ENCODE measurements at regions of chr2 and their contacts with region 1.

Region 1: DNA sequence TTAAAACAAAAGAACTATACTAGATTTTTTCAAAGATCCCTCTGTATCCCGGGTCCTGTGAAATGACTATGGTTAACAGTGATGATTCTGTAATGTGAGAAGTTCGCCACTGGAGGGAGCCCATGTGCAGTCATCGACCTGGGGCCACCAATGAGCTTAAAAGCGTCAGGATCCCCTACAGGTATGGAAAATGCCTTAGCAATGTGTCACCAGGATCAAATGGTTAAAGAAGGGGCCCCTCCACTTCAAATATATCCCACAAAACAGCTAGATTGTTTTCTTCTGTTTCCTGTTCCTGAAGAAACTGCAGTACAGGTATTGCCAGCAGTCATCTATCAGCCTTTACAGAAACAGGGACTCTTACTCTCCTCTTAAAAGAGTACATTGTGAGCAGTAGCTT is 15.3 kb downstream of the CHRNA1 start:
- DNase-seq: peak; percentile 53 to 83 (median 74)
- ATAC-seq: peak; percentile 45
- H3K4me3 ChIP-seq: no peak overlapping the region
- H3K4me3 Mint-ChIP-seq: no peak overlapping the region
- H3K27ac ChIP-seq: no peak overlapping the region
- H3K27ac Mint-ChIP-seq: peak overlapping the region; percentile 32
- H3K4me1 ChIP-seq: peaks cover 15% of the 10 kb centered on the region
- H3K4me1 Mint-ChIP-seq: peaks cover 33% of the 10 kb centered on the region
- H3K27me3 ChIP-seq: no peaks in the 10 kb centered on the region
- H3K27me3 Mint-ChIP-seq: no peaks in the 10 kb centered on the region
- CTCF ChIP-seq: peak; percentile 85

Region 2: GRCh38 chr2:174522553-174522952 is 226.4 kb before region 1 on chr2:
- CTCF ChIA-PET with region 1: no interaction called
- POLR2A ChIA-PET with region 1: no interaction called
- intact Hi-C with region 1: no loop called
- DNase-seq: peak in 2 of 9 experiments; percentile 32 to 44
- ATAC-seq: no peak
- H3K4me3 ChIP-seq: no peak overlapping the region
- H3K4me3 Mint-ChIP-seq: no peak overlapping the region
- H3K27ac ChIP-seq: no peak overlapping the region
- H3K27ac Mint-ChIP-seq: no peak overlapping the region
- H3K4me1 ChIP-seq: no peaks in the 10 kb centered on the region
- H3K4me1 Mint-ChIP-seq: peaks cover 18% of the 10 kb centered on the region
- H3K27me3 ChIP-seq: no peaks in the 10 kb centered on the region
- H3K27me3 Mint-ChIP-seq: no peaks in the 10 kb centered on the region
- CTCF ChIP-seq: no peak

Region 3: GRCh38 chr2:174561283-174561971 is 187.5 kb before region 1 on chr2:
- CTCF ChIA-PET with region 1: no interaction called
- POLR2A ChIA-PET with region 1: no interaction called
- intact Hi-C with region 1: no loop called
- DNase-seq: no peak
- ATAC-seq: no peak
- H3K4me3 ChIP-seq: no peak overlapping the region
- H3K4me3 Mint-ChIP-seq: no peak overlapping the region
- H3K27ac ChIP-seq: peak overlapping the region in 1 of 2 experiments; percentile 34
- H3K27ac Mint-ChIP-seq: peak overlapping the region; percentile 81
- H3K4me1 ChIP-seq: no peaks in the 10 kb centered on the region
- H3K4me1 Mint-ChIP-seq: peaks cover 7% of the 10 kb centered on the region
- H3K27me3 ChIP-seq: no peaks in the 10 kb centered on the region
- H3K27me3 Mint-ChIP-seq: no peaks in the 10 kb centered on the region
- CTCF ChIP-seq: no peak

Region 4: GRCh38 chr2:174729797-174730697 is 18.9 kb before region 1 on chr2:
- CTCF ChIA-PET with region 1: interaction called, 12 read pairs
- POLR2A ChIA-PET with region 1: interaction called, 3 read pairs
- intact Hi-C with region 1: no loop called
- DNase-seq: peak in 8 of 9 experiments; percentile 2 to 61 (median 34)
- ATAC-seq: peak; percentile 76
- H3K4me3 ChIP-seq: peak overlapping the region; percentile 60 to 74
- H3K4me3 Mint-ChIP-seq: peak overlapping the region; percentile 88
- H3K27ac ChIP-seq: no peak overlapping the region
- H3K27ac Mint-ChIP-seq: no peak overlapping the region
- H3K4me1 ChIP-seq: peaks cover 10% of the 10 kb centered on the region
- H3K4me1 Mint-ChIP-seq: peaks cover 20% of the 10 kb centered on the region
- H3K27me3 ChIP-seq: peaks cover 0 to 7% of the 10 kb centered on the region in 2 experiments
- H3K27me3 Mint-ChIP-seq: peaks cover 8% of the 10 kb centered on the region
- CTCF ChIP-seq: no peak

Region 5: DNA sequence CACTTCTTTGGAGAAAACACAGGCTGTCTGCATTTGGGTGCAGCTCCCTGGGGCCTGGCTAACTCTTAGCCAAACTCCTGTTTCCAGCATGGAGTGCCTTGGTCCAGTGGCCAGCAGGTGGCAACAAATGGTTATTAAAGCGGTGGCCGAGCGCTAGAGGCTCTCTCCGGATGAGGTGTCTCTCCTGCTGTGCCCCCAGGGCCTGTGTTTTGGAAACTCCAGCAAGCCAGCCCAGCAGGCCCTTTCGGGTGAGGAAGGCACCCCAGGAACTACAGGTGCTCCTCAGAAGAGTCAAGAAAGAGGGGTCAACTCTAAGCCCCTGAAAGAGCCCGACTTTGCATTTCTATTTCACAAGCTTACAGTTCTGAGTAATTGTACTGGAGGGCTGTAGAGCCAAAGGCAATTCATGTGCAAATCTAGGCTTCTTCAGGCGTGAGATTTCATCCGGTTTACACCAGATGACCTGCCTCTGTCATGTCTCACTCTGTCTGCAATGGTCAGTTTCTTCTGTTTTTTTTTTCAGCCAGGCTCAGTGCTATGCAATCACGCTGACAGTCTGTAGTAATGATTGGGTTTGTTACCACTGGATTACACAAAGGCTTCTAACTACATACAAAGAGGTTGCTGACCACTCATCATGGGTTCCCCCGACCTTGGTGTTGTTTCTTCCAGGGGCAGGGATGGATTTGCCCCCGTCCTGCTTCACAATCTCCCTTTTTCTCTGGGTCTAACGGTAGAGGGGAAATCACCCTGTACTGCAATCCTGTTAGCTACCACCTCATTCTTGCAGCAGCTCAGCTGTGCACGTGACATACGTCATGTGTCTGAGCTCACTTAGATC is 22.9 kb after region 1 on chr2:
- CTCF ChIA-PET with region 1: interaction called, 14 read pairs
- POLR2A ChIA-PET with region 1: no interaction called
- intact Hi-C with region 1: loop called in 1 of 2 experiments (anchors 1 kb)
- DNase-seq: peak in 6 of 9 experiments; percentile 23 to 68 (median 51)
- ATAC-seq: peak; percentile 60
- H3K4me3 ChIP-seq: no peak overlapping the region
- H3K4me3 Mint-ChIP-seq: no peak overlapping the region
- H3K27ac ChIP-seq: no peak overlapping the region
- H3K27ac Mint-ChIP-seq: peak overlapping the region; percentile 3
- H3K4me1 ChIP-seq: peaks cover 14% of the 10 kb centered on the region
- H3K4me1 Mint-ChIP-seq: peaks cover 21% of the 10 kb centered on the region
- H3K27me3 ChIP-seq: no peaks in the 10 kb centered on the region
- H3K27me3 Mint-ChIP-seq: no peaks in the 10 kb centered on the region
- CTCF ChIP-seq: no peak

Region 6: DNA sequence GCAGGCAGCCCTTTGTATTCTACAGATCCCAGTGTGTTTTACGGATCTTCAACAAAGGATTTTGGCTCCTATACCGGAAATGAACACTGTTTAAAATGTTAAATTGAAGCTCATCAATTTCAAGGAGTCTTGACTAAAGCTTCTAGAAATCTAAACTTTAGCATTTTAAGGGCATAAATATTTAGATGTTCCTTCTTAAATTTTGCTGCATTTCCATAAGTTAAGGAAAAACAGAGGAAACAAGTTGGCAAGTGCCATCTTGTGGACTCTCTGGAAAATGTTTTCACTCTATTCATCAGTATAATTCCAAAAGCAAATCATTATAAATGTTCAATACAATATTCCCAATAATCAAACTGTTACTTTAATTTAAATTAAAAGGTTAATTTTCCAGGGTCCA is 236.7 kb after region 1 on chr2:
- CTCF ChIA-PET with region 1: interaction called, 43 read pairs
- POLR2A ChIA-PET with region 1: interaction called, 3 read pairs
- intact Hi-C with region 1: loop called (anchors 1 kb)
- DNase-seq: no peak
- ATAC-seq: no peak
- H3K4me3 ChIP-seq: no peak overlapping the region
- H3K4me3 Mint-ChIP-seq: no peak overlapping the region
- H3K27ac ChIP-seq: no peak overlapping the region
- H3K27ac Mint-ChIP-seq: no peak overlapping the region
- H3K4me1 ChIP-seq: no peaks in the 10 kb centered on the region
- H3K4me1 Mint-ChIP-seq: peaks cover 6% of the 10 kb centered on the region
- H3K27me3 ChIP-seq: no peaks in the 10 kb centered on the region
- H3K27me3 Mint-ChIP-seq: peaks cover 4% of the 10 kb centered on the region
- CTCF ChIP-seq: no peak

Measured in CD8-positive, alpha-beta T cell (primary cell).